Activated B cell treated with CpG ODN at 0.5 μM for 24 hours (primary cell): ENCODE measurements at regions of chr17 and their contacts with region 1.

Region 1: DNA sequence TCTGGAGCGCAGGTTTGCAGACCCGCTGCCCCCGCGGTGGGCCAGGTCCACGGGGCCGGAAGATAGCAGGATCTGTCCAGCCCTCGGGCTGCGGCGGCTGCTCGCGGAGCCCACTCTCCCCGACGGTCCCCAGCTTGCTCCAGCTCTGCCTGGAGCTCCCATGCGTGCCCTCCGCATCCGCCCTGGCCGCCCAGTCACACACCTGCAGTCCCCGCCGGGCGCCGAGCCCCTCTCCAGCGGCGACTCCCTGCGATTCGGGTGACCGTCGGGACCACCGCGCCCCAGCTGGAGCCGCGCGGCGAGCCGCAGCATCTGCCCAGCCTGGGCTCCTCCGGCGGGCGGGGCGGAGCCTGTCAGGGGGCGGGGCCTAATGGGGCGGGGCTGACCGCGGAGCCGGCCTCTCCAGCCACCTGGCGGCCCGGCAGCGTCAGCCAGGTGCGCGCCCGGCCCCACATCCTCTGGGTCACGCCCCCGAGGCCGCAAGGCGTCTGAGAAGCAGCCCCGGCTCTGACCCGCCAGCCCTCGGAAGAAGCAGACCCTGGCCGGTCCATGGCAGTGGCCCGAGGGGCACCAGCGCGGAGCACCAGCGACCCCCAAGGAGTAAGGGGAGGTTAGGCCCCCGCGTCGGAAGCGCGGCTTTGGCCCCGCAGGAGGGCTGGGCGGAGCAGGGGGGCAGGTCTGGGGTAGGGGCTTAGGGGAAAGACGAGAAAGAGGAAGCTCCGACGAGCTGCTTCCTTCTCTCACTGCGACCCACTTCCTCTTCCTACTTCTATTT is at the start of gene PIK3R5:
- DNase-seq: peak; percentile 88
- ATAC-seq: peak; percentile 87
- H3K4me3 Mint-ChIP-seq: peak within 1 kb of the TSS; percentile 88
- H3K27ac Mint-ChIP-seq: peak within 1 kb of the TSS; percentile 83
- H3K4me1 Mint-ChIP-seq: peaks cover 58% of the 10 kb centered on the region
- H3K27me3 Mint-ChIP-seq: no peaks in the 10 kb centered on the region
- CTCF ChIP-seq: no peak
- total RNA-seq, gene PIK3R5: 31.0 and 34.2 TPM in 2 replicates

Region 2: DNA sequence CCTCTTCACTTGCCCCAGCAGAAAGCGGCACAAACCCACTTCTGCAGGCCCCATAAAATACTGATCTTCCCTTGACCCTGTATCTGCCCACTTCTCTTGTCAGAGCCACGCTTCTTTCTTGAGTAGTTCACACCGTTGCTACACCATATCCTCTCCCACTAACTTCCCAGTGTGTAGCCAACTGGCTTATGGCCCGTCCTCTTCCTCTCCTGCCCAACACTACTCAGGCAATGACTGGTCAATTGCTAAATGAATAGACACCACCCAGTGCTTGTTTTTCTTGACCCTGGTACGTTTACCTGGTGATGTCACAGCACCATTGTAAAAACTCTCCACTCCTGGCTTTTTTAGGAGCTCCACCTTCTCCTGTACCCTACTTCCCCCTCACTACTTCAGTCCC is 443.0 kb before region 1 on chr17:
- CTCF ChIA-PET with region 1: no interaction called
- POLR2A ChIA-PET with region 1: no interaction called
- intact Hi-C with region 1: no loop called
- DNase-seq: no peak
- ATAC-seq: no peak
- H3K4me3 Mint-ChIP-seq: no peak overlapping the region
- H3K27ac Mint-ChIP-seq: no peak overlapping the region
- H3K4me1 Mint-ChIP-seq: no peaks in the 10 kb centered on the region
- H3K27me3 Mint-ChIP-seq: no peaks in the 10 kb centered on the region
- CTCF ChIP-seq: no peak

Region 3: DNA sequence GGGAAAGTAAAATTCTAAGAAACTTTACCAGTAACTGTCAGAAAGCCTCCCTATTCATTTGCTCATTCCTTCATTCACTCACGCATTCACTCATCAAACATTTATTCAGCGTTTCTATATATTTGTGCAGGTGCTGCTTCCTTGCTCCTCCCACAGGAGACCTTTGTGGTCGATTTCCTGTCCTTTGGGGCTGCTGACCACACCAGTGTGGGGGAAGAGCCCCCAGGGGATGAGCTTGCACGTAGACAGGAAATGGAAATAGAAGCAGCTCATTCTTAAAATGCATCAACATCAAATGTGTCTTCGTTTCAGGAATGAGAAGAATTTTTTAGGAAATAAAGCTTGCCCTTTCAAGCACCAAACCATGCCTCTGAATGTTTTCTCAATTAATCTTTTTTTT is 107.7 kb before region 1 on chr17:
- CTCF ChIA-PET with region 1: interaction called, 3 read pairs
- POLR2A ChIA-PET with region 1: interaction called, 20 read pairs
- intact Hi-C with region 1: loop called (anchors 1 kb)
- DNase-seq: peak; percentile 63
- ATAC-seq: peak; percentile 82
- H3K4me3 Mint-ChIP-seq: peak overlapping the region; percentile 70
- H3K27ac Mint-ChIP-seq: peak overlapping the region; percentile 65
- H3K4me1 Mint-ChIP-seq: peaks cover 51% of the 10 kb centered on the region
- H3K27me3 Mint-ChIP-seq: no peaks in the 10 kb centered on the region
- CTCF ChIP-seq: no peak

Region 4: DNA sequence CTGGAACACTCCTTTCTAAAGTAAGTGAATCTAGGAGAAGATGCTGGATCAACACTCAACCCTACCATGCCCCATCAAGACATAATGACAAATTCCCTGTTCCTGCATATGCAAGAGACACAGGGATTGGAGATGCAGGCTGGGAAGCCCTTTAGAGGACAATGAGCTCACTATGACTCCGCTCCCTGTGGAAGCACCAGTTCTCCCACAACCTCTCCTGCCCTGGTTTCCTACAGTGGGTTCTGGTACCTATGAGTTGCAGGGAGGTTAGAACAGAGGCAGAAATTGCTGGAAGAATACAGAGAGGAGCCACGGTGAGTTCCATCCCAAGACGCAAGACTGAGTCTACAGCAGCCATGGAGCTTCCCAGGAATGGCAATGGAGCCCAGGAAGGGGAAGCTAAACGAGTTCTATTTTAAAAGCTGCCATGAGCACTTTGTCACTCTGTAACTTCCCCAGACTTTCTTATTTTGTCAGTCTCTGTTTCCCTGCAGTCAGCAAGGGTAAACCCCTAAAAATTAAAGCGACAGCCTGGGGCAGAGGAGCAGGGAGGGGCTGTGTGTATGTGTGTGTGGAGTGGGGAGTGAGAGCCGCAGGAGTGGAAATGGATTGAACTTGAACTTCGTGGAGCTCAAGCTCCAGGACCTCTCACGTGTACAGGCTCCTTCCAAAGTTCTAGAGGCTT is 55.9 kb before region 1 on chr17:
- CTCF ChIA-PET with region 1: interaction called, 5 read pairs
- POLR2A ChIA-PET with region 1: interaction called, 34 read pairs
- intact Hi-C with region 1: loop called (anchors 1 kb)
- DNase-seq: no peak
- ATAC-seq: no peak
- H3K4me3 Mint-ChIP-seq: peak overlapping the region; percentile 13
- H3K27ac Mint-ChIP-seq: peak overlapping the region; percentile 31
- H3K4me1 Mint-ChIP-seq: peaks cover 46% of the 10 kb centered on the region
- H3K27me3 Mint-ChIP-seq: no peaks in the 10 kb centered on the region
- CTCF ChIP-seq: no peak

Region 5: GRCh38 chr17:8941520-8941919 is 24.1 kb before region 1 on chr17:
- CTCF ChIA-PET with region 1: no interaction called
- POLR2A ChIA-PET with region 1: interaction called, 47 read pairs
- intact Hi-C with region 1: loop called (anchors 1 kb)
- DNase-seq: no peak
- ATAC-seq: peak; percentile 57
- H3K4me3 Mint-ChIP-seq: peak overlapping the region; percentile 51
- H3K27ac Mint-ChIP-seq: peak overlapping the region; percentile 73
- H3K4me1 Mint-ChIP-seq: peaks cover 68% of the 10 kb centered on the region
- H3K27me3 Mint-ChIP-seq: no peaks in the 10 kb centered on the region
- CTCF ChIP-seq: no peak

Region 6: DNA sequence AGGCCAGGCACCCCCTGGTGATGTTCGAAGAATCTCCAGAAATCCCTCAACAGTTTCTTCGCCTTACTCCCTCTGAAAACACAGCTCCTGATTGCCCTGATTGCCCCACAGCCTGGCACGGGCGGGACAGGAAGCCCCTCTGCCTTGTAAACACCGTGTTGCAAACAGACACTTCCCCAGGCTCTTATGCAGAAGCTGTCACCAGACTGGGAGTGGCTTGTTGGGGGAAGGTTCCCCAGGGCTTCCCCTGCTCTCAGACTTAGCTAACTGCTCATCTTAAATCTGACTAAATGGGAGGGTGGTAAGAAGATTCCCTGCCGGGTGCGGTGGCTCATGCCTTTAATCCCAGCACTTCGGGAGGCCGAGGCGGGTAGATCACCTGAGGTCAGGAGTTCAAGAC is 11.2 kb before region 1 on chr17:
- CTCF ChIA-PET with region 1: interaction called, 9 read pairs
- POLR2A ChIA-PET with region 1: interaction called, 83 read pairs
- intact Hi-C with region 1: loop called (anchors 1 kb)
- DNase-seq: peak; percentile 48
- ATAC-seq: peak; percentile 99
- H3K4me3 Mint-ChIP-seq: peak overlapping the region; percentile 70
- H3K27ac Mint-ChIP-seq: peak overlapping the region; percentile 86
- H3K4me1 Mint-ChIP-seq: peaks cover 92% of the 10 kb centered on the region
- H3K27me3 Mint-ChIP-seq: no peaks in the 10 kb centered on the region
- CTCF ChIP-seq: no peak

Region 7: DNA sequence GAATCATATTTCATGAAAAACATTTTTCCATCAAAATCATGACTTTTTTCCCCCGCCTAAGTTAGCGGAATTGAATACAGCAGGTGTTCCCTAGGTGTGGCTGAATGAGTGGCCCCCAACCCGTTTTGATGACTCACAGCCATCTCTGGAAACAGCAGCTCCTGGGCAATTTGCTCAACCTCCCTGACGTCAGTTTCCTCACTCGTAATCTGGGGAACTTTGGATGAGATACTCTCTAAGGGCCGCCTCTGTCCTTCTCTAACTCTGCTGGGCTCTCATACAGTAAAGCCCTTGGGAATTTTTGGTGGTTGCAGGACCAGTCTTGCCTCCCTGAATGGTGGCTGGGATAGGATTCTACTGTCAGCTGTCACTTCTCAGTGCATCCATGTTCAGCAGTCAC is 44.2 kb after region 1 on chr17:
- CTCF ChIA-PET with region 1: no interaction called
- POLR2A ChIA-PET with region 1: no interaction called
- intact Hi-C with region 1: no loop called
- DNase-seq: no peak
- ATAC-seq: no peak
- H3K4me3 Mint-ChIP-seq: no peak overlapping the region
- H3K27ac Mint-ChIP-seq: no peak overlapping the region
- H3K4me1 Mint-ChIP-seq: no peaks in the 10 kb centered on the region
- H3K27me3 Mint-ChIP-seq: peaks cover 57% of the 10 kb centered on the region
- CTCF ChIP-seq: no peak

Region 8: GRCh38 chr17:9557161-9557755 is 591.7 kb after region 1 on chr17:
- CTCF ChIA-PET with region 1: no interaction called
- POLR2A ChIA-PET with region 1: interaction called, 14 read pairs
- intact Hi-C with region 1: no loop called
- DNase-seq: no peak
- ATAC-seq: no peak
- H3K4me3 Mint-ChIP-seq: no peak overlapping the region
- H3K27ac Mint-ChIP-seq: no peak overlapping the region
- H3K4me1 Mint-ChIP-seq: no peaks in the 10 kb centered on the region
- H3K27me3 Mint-ChIP-seq: no peaks in the 10 kb centered on the region
- CTCF ChIP-seq: no peak